ENCODE measurements at regions of chr13 and their contacts with region 1.

Region 1: DNA sequence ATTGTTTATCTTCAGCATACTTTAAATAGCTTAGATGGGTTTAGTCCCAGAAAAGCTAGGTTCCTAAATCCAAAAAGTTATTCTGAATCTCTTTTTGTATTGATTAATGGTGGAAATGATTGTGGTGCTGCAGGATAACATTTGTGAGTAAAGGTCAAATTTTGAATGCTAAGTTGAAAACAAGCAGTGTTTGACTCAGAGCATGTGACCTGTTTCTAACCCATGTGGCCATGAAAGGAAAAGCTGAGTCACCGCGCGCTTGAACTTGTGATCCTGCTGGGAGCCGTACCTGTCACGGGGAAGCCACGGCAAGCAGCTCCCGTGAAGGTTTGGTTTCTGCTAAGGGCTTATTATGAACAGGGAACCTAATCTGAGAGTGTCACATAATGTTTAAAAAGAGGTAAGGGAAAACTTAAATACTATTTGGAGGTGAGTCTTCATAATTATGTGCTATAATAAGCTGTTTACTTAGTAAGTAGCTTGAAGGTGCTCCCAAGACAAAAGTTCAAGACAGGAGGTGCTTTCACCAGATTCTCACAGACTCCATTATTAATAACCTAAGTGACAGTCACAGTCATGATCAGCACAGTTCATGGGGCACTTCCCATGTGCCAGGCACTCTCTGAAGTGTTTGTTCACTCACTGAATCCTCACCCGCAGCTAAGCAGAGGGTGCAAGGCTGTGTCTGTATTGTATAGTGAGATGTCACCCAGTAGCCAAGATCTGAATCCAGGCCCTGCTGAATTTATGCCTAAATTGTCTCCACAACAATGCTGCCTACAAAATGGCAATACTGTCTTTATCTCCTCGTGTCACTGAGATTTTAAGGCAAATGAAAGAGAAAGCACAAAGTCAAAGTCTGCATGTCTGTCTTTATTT is 286.5 kb downstream of the MYO16 start:
- DNase-seq: peak; percentile 65
- H3K4me3 ChIP-seq: no peak overlapping the region
- H3K27ac ChIP-seq: peak overlapping the region; percentile 68
- H3K27me3 ChIP-seq: no peaks in the 10 kb centered on the region
- CTCF ChIP-seq: no peak

Region 2: DNA sequence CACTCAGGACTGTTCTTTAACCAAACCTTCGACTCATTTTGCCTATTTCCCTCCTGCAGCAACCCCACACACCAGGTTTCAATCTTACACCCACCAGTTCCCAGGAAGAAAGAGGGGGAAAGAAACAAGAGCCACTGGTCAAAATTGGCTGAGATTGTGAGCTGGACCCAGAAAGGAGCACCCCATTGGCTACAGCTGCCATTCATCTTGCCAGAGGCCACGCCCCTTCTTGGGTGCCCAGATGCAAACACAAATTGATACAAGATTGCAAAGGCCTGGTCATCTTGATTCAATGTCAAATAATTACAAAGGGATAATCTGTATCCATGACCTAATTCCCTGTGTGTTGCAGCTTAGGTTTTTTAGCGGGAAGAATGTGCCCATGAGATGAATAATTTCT is 959.0 kb before region 1 on chr13:
- CTCF ChIA-PET with region 1: no interaction called
- POLR2A ChIA-PET with region 1: no interaction called
- DNase-seq: no peak
- H3K4me3 ChIP-seq: no peak overlapping the region
- H3K27ac ChIP-seq: no peak overlapping the region
- H3K27me3 ChIP-seq: no peaks in the 10 kb centered on the region
- CTCF ChIP-seq: no peak

Region 3: GRCh38 chr13:108902557-108903155 is 13.2 kb before region 1 on chr13:
- CTCF ChIA-PET with region 1: interaction called, 18 read pairs
- POLR2A ChIA-PET with region 1: no interaction called
- DNase-seq: no peak
- H3K4me3 ChIP-seq: no peak overlapping the region
- H3K27ac ChIP-seq: no peak overlapping the region
- H3K27me3 ChIP-seq: no peaks in the 10 kb centered on the region
- CTCF ChIP-seq: no peak

Region 4: DNA sequence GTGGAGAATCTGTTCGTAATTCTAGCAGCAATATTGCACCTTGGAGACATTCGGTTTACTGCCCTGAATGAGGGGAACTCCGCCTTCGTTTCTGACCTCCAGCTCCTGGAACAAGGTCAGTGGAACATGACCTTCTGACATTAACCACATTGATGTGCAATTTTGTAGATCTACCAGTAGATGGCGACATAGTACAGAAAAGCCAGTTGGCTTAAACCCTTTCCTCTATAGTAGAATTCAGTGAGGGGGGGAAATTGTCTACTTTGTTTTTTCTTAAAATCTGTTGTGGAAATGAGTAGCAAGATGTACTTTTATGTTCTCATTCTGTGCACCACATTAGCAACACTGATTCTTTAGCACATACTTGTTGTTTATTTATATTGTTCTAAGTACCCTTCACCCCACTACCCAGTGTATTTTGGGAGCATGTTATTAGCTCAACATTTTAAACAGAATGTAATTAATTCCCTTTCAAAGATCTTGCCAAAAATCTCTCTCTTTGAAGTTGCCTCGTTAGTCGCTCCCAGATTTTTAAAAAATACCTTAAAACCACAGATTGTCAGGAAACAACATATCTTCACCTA is 45.8 kb after region 1 on chr13:
- CTCF ChIA-PET with region 1: interaction called, 19 read pairs
- POLR2A ChIA-PET with region 1: interaction called, 4 read pairs
- DNase-seq: no peak
- H3K4me3 ChIP-seq: no peak overlapping the region
- H3K27ac ChIP-seq: no peak overlapping the region
- H3K27me3 ChIP-seq: no peaks in the 10 kb centered on the region
- CTCF ChIP-seq: peak; percentile 82

Region 5: GRCh38 chr13:110108347-110109174 is 1192.7 kb after region 1 on chr13:
- CTCF ChIA-PET with region 1: interaction called, 12 read pairs
- POLR2A ChIA-PET with region 1: interaction called, 3 read pairs
- DNase-seq: peak; percentile 73
- H3K4me3 ChIP-seq: no peak overlapping the region
- H3K27ac ChIP-seq: no peak overlapping the region
- H3K27me3 ChIP-seq: no peaks in the 10 kb centered on the region
- CTCF ChIP-seq: peak; percentile 87

Region 6: GRCh38 chr13:110116072-110116487 is 1200.2 kb after region 1 on chr13:
- CTCF ChIA-PET with region 1: interaction called, 10 read pairs
- POLR2A ChIA-PET with region 1: interaction called, 3 read pairs
- DNase-seq: no peak
- H3K4me3 ChIP-seq: no peak overlapping the region
- H3K27ac ChIP-seq: no peak overlapping the region
- H3K27me3 ChIP-seq: no peaks in the 10 kb centered on the region
- CTCF ChIP-seq: peak; percentile 88